Ascending aorta (tissue), 2 donors: ENCODE measurements at regions of chr14 and their contacts with region 1.

Region 1: GRCh38 chr14:39015360-39015961 is 87.6 kb downstream of the SEC23A start:
- DNase-seq: no peak
- H3K4me3 ChIP-seq: no peak overlapping the region
- H3K27ac ChIP-seq: no peak overlapping the region
- H3K4me1 ChIP-seq: no peaks in the 10 kb centered on the region
- H3K27me3 ChIP-seq: no peaks in the 10 kb centered on the region
- CTCF ChIP-seq: peak; percentile 35 to 78 (median 75)

Region 2: DNA sequence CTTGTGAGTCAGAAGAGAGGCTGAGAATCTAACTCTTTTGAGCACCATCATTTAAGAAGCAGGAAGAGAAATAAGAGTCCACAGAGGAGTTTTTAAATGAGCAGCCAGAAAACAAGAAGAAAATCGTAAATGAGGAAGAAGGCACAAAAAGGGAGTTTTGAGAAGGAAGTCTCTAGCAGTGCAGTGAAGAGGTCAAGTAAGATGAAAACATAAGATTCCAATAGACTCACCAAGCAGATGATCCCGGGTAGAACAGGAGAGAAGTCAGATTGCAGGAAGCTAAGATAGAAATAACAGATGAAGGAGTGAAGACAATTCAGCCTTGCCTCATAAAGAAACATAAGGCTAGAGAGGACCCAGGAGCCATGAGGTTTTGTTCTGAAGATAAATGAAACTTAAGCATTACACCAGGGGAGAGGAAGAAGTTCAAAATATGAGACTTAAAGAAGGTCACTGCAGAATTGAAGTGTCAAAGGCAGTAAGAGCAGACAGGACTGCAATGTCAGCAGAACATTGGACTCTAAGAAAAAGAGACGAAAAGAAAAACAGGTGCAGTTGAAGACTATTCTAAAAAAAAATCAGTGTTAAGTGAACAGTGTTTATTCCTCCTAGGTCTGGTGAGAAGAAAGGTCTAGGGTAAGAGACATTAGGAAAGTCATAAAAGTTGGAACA is 141.4 kb before region 1 on chr14:
- intact Hi-C with region 1: loop called (anchors 10 kb)
- DNase-seq: no peak
- H3K4me3 ChIP-seq: no peak overlapping the region
- H3K27ac ChIP-seq: no peak overlapping the region
- H3K4me1 ChIP-seq: no peaks in the 10 kb centered on the region
- H3K27me3 ChIP-seq: no peaks in the 10 kb centered on the region
- CTCF ChIP-seq: no peak